AG04450 (cell line): ENCODE measurements at regions of chr11 and their contacts with region 1.

Region 1: GRCh38 chr11:3037040-3037944 is 19.9 kb downstream of the CARS1 start:
- DNase-seq: peak; percentile 26
- H3K4me3 ChIP-seq: no peak overlapping the region
- H3K27ac ChIP-seq: no peak overlapping the region
- H3K27me3 ChIP-seq: no peaks in the 10 kb centered on the region
- CTCF ChIP-seq: peak; percentile 81

Region 2: DNA sequence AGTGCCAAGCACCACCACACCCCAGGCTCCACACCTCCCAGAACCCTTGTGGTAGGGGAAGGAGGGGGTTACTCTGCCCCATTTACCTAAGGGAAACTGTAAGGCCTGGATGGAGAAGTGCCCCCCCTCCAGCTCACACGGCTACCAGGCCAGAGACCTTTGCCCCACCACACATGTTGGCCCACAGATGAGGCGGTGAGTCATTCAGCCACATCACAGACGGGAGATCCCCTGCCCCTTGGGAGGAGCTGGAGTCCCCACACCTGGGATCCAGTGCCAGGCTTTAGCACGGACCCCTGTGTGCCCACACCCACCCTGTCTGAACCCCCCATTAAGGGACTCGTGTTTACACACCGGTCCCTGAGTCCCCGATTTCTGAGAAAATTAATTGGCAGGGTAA is 176.7 kb before region 1 on chr11:
- CTCF ChIA-PET with region 1: no interaction called
- POLR2A ChIA-PET with region 1: no interaction called
- DNase-seq: no peak
- H3K4me3 ChIP-seq: no peak overlapping the region
- H3K27ac ChIP-seq: no peak overlapping the region
- H3K27me3 ChIP-seq: peaks cover 81% of the 10 kb centered on the region
- CTCF ChIP-seq: no peak

Region 3: GRCh38 chr11:3049430-3050243 is 12.3 kb after region 1 on chr11:
- CTCF ChIA-PET with region 1: interaction called, 16 read pairs
- POLR2A ChIA-PET with region 1: no interaction called
- DNase-seq: peak; percentile 94
- H3K4me3 ChIP-seq: peak overlapping the region; percentile 44
- H3K27ac ChIP-seq: peak overlapping the region; percentile 96
- H3K27me3 ChIP-seq: no peaks in the 10 kb centered on the region
- CTCF ChIP-seq: peak; percentile 43